Activated B cell treated with CpG ODN at 0.5 μM for 24 hours (primary cell): ENCODE measurements at regions of chr15 and their contacts with region 1.

Region 1: GRCh38 chr15:56245871-56246814 is 2.5 kb upstream of the RFX7 start:
- DNase-seq: peak; percentile 78
- ATAC-seq: peak; percentile 70
- H3K4me3 Mint-ChIP-seq: peak overlapping the region; percentile 88
- H3K27ac Mint-ChIP-seq: peak overlapping the region; percentile 94
- H3K4me1 Mint-ChIP-seq: peaks cover 37% of the 10 kb centered on the region
- H3K27me3 Mint-ChIP-seq: no peaks in the 10 kb centered on the region
- CTCF ChIP-seq: peak; percentile 97

Region 2: DNA sequence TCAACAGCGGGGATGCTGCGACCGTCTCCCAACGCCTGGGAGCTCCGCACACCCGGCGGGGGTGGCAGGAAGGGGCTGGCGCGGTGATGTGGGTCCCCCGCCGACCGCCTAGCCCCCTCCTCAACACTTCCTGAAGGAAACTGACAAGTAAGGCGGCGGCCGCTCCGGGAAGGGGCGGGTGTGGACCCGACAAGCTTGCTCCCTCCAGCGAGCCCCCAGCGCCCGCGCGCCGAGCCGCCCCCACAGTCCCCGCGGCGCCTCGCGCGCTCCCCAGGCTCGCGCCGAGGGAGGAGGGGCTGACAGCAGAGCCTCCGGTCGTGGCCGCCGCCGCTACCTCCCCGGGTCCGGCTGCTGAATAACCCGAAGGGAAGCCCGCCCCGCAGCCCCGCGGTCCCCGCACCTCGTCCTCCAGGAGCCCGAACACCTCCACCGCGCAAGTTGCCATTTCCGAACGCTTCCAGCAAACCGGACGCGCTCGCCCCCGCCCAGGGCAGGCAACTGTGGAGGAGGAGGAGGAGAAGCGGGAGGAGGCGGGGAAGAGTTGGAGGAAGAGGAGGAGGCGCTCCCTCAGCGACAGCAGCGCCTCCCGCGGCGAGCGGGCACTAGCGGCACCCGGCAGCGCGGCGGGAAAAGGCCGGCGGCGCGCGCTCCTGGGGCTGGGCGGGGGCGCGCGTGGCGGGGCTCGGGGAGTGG is 252.9 kb before region 1 on chr15 and contains the start of gene NEDD4:
- CTCF ChIA-PET with region 1: no interaction called
- POLR2A ChIA-PET with region 1: no interaction called
- intact Hi-C with region 1: loop called (anchors 2 kb)
- DNase-seq: peak; percentile 61
- ATAC-seq: peak; percentile 84
- H3K4me3 Mint-ChIP-seq: peak within 1 kb of the TSS; percentile 89
- H3K27ac Mint-ChIP-seq: no peak within 1 kb of the TSS
- H3K4me1 Mint-ChIP-seq: peaks cover 10% of the 10 kb centered on the region
- H3K27me3 Mint-ChIP-seq: peaks cover 16% of the 10 kb centered on the region
- CTCF ChIP-seq: no peak
- total RNA-seq, gene NEDD4: 0.47 and 0.66 TPM in 2 replicates

Region 3: GRCh38 chr15:56102441-56102840 is 143.7 kb before region 1 on chr15:
- CTCF ChIA-PET with region 1: no interaction called
- POLR2A ChIA-PET with region 1: no interaction called
- intact Hi-C with region 1: loop called (anchors 10 kb)
- DNase-seq: no peak
- ATAC-seq: no peak
- H3K4me3 Mint-ChIP-seq: no peak overlapping the region
- H3K27ac Mint-ChIP-seq: no peak overlapping the region
- H3K4me1 Mint-ChIP-seq: no peaks in the 10 kb centered on the region
- H3K27me3 Mint-ChIP-seq: no peaks in the 10 kb centered on the region
- CTCF ChIP-seq: no peak

Region 4: GRCh38 chr15:56365075-56365711 is 119.0 kb after region 1 on chr15 and contains the start of gene TEX9:
- CTCF ChIA-PET with region 1: no interaction called
- POLR2A ChIA-PET with region 1: interaction called, 3 read pairs
- intact Hi-C with region 1: loop called (anchors 1 kb)
- DNase-seq: peak; percentile 73
- ATAC-seq: peak; percentile 92
- H3K4me3 Mint-ChIP-seq: peak within 1 kb of the TSS; percentile 95
- H3K27ac Mint-ChIP-seq: peak within 1 kb of the TSS; percentile 77
- H3K4me1 Mint-ChIP-seq: peaks cover 32% of the 10 kb centered on the region
- H3K27me3 Mint-ChIP-seq: peaks cover 3% of the 10 kb centered on the region
- CTCF ChIP-seq: no peak
- total RNA-seq, gene TEX9: 29.7 and 31.3 TPM in 2 replicates

Region 5: GRCh38 chr15:56464893-56465520 is 218.9 kb after region 1 on chr15 and contains the start of gene MNS1:
- CTCF ChIA-PET with region 1: no interaction called
- POLR2A ChIA-PET with region 1: interaction called, 4 read pairs
- intact Hi-C with region 1: loop called (anchors 2 kb)
- DNase-seq: peak; percentile 84
- ATAC-seq: peak; percentile 95
- H3K4me3 Mint-ChIP-seq: peak within 1 kb of the TSS; percentile 92
- H3K27ac Mint-ChIP-seq: peak within 1 kb of the TSS; percentile 97
- H3K4me1 Mint-ChIP-seq: peaks cover 21% of the 10 kb centered on the region
- H3K27me3 Mint-ChIP-seq: no peaks in the 10 kb centered on the region
- CTCF ChIP-seq: no peak
- total RNA-seq, gene MNS1: 0.62 and 0.66 TPM in 2 replicates

Region 6: DNA sequence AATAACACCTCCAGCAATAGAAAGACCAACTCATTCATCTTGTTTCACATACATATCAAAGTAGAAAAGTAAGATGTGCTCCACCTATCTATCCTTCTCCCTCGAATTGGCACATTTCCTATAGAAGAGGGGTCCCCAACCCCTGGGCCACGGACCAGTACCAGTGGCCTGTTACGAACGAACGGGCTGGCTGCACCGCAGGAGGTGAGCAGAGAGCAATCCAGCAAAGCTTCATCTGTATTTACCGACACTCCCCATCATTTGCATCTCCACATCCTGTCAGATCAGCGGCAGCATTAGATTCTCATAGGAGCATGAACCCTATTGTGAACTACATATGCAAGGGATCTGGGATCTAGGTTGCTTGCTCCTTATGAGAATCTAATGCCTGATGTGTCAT is 1035.2 kb after region 1 on chr15:
- CTCF ChIA-PET with region 1: no interaction called
- POLR2A ChIA-PET with region 1: no interaction called
- intact Hi-C with region 1: loop called (anchors 10 kb)
- DNase-seq: no peak
- ATAC-seq: peak; percentile 65
- H3K4me3 Mint-ChIP-seq: peak overlapping the region; percentile 83
- H3K27ac Mint-ChIP-seq: peak overlapping the region; percentile 98
- H3K4me1 Mint-ChIP-seq: peaks cover 79% of the 10 kb centered on the region
- H3K27me3 Mint-ChIP-seq: no peaks in the 10 kb centered on the region
- CTCF ChIP-seq: no peak